Activated CD8-positive, alpha-beta T cell treated with anti-CD3 and anti-CD28 coated beads, Interleukin-2, amount 10 ng/mL, durations not matched to agents 7 days and 5 days (primary cell): ENCODE measurements at regions of chr15 and their contacts with region 1.

Region 1: GRCh38 chr15:59410391-59410896 is 27.5 kb upstream of the FAM81A start:
- DNase-seq: no peak
- ATAC-seq: peak; percentile 48
- H3K4me3 Mint-ChIP-seq: peak overlapping the region; percentile 34
- H3K27ac Mint-ChIP-seq: peak overlapping the region; percentile 76
- H3K4me1 Mint-ChIP-seq: peaks cover 52% of the 10 kb centered on the region
- H3K27me3 Mint-ChIP-seq: peaks cover 18% of the 10 kb centered on the region

Region 2: GRCh38 chr15:59399465-59400102 is 10.9 kb before region 1 on chr15:
- CTCF ChIA-PET with region 1: interaction called, 11 read pairs
- POLR2A ChIA-PET with region 1: no interaction called
- DNase-seq: no peak
- ATAC-seq: no peak
- H3K4me3 Mint-ChIP-seq: no peak overlapping the region
- H3K27ac Mint-ChIP-seq: no peak overlapping the region
- H3K4me1 Mint-ChIP-seq: peaks cover 15% of the 10 kb centered on the region
- H3K27me3 Mint-ChIP-seq: peaks cover 49% of the 10 kb centered on the region